Activated CD8-positive, alpha-beta T cell treated with anti-CD3 and anti-CD28 coated beads for 36 hours (primary cell): ENCODE measurements at regions of chr14 and their contacts with region 1.

Region 1: GRCh38 chr14:54773171-54773975 is 129.3 kb downstream of the GCH1 start:
- DNase-seq: peak; percentile 93
- ATAC-seq: peak; percentile 83
- H3K4me3 Mint-ChIP-seq: peak overlapping the region; percentile 16
- H3K27ac Mint-ChIP-seq: peak overlapping the region; percentile 79
- H3K4me1 Mint-ChIP-seq: peaks cover 47% of the 10 kb centered on the region
- H3K27me3 Mint-ChIP-seq: peaks cover 9% of the 10 kb centered on the region
- CTCF ChIP-seq: no peak

Region 2: GRCh38 chr14:54566410-54567223 is 206.8 kb before region 1 on chr14 and contains the start of gene SAMD4A:
- CTCF ChIA-PET with region 1: interaction called, 247 read pairs
- POLR2A ChIA-PET with region 1: interaction called, 21 read pairs
- intact Hi-C with region 1: loop called (anchors 1 kb)
- DNase-seq: peak; percentile 73
- ATAC-seq: peak; percentile 28
- H3K4me3 Mint-ChIP-seq: peak within 1 kb of the TSS; percentile 84
- H3K27ac Mint-ChIP-seq: peak within 1 kb of the TSS; percentile 86
- H3K4me1 Mint-ChIP-seq: peaks cover 19% of the 10 kb centered on the region
- H3K27me3 Mint-ChIP-seq: peaks cover 18% of the 10 kb centered on the region
- CTCF ChIP-seq: peak; percentile 29
- total RNA-seq, gene SAMD4A: 4.5 to 4.9 TPM

Region 3: GRCh38 chr14:54669721-54670561 is 103.4 kb before region 1 on chr14:
- CTCF ChIA-PET with region 1: interaction called, 34 read pairs
- POLR2A ChIA-PET with region 1: interaction called, 4 read pairs
- intact Hi-C with region 1: loop called (anchors 10 kb)
- DNase-seq: peak; percentile 61
- ATAC-seq: peak; percentile 82
- H3K4me3 Mint-ChIP-seq: no peak overlapping the region
- H3K27ac Mint-ChIP-seq: no peak overlapping the region
- H3K4me1 Mint-ChIP-seq: peaks cover 22% of the 10 kb centered on the region
- H3K27me3 Mint-ChIP-seq: peaks cover 35% of the 10 kb centered on the region
- CTCF ChIP-seq: no peak

Region 4: GRCh38 chr14:54712465-54713200 is 60.7 kb before region 1 on chr14:
- CTCF ChIA-PET with region 1: interaction called, 13 read pairs
- POLR2A ChIA-PET with region 1: no interaction called
- intact Hi-C with region 1: no loop called
- DNase-seq: no peak
- ATAC-seq: no peak
- H3K4me3 Mint-ChIP-seq: no peak overlapping the region
- H3K27ac Mint-ChIP-seq: no peak overlapping the region
- H3K4me1 Mint-ChIP-seq: peaks cover 18% of the 10 kb centered on the region
- H3K27me3 Mint-ChIP-seq: peaks cover 7% of the 10 kb centered on the region
- CTCF ChIP-seq: no peak

Region 5: DNA sequence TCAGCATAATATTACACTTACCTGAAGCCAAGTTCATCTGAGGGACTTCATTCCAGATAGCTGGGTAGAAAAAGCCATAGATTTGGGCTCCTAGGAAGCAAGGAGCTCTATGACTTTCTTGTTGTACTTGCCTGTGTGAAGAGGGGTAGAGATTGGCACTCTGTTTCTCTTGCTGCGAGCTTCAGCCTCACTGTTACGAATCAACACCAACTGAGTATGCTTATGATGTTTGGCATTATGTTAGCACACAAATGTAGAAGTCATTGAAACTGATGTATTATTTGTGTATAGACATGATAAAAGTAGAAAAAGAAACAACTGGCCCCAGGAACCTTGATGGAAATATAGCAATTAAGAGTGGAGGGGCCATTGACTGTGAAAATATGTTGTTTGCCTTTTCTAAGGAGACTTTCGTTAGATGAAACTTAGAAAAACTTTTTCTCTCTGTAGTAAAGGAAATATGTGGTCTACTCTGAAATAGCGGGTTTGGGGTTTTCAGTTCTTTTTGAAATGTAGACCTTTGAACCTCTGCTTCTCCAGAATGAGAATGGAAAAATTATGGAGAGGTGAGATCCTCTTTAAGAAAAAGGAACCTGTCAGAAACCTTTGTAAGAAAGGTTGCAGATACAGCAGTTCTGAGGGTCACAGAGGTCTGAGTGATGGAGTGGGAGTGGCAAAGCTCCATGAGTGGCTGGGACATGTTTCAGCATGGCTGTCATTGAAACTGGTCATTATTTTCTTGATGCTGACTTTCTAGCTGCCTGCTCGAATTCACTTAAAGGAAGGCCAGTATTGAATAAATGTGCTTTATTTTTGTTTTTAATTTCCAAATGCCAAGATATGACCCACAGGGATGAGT is 30.7 kb before region 1 on chr14:
- CTCF ChIA-PET with region 1: interaction called, 20 read pairs
- POLR2A ChIA-PET with region 1: interaction called, 4 read pairs
- intact Hi-C with region 1: no loop called
- DNase-seq: peak; percentile 45
- ATAC-seq: peak; percentile 74
- H3K4me3 Mint-ChIP-seq: peak overlapping the region; percentile 27
- H3K27ac Mint-ChIP-seq: peak overlapping the region; percentile 68
- H3K4me1 Mint-ChIP-seq: peaks cover 46% of the 10 kb centered on the region
- H3K27me3 Mint-ChIP-seq: peaks cover 10% of the 10 kb centered on the region
- CTCF ChIP-seq: no peak

Region 6: GRCh38 chr14:54818201-54819133 is 45.1 kb after region 1 on chr14:
- CTCF ChIA-PET with region 1: interaction called, 11 read pairs
- POLR2A ChIA-PET with region 1: no interaction called
- intact Hi-C with region 1: no loop called
- DNase-seq: no peak
- ATAC-seq: no peak
- H3K4me3 Mint-ChIP-seq: no peak overlapping the region
- H3K27ac Mint-ChIP-seq: no peak overlapping the region
- H3K4me1 Mint-ChIP-seq: no peaks in the 10 kb centered on the region
- H3K27me3 Mint-ChIP-seq: peaks cover 2% of the 10 kb centered on the region
- CTCF ChIP-seq: no peak